PC-3 (cell line): ENCODE measurements at regions of chr17 and their contacts with region 1.

Region 1: DNA sequence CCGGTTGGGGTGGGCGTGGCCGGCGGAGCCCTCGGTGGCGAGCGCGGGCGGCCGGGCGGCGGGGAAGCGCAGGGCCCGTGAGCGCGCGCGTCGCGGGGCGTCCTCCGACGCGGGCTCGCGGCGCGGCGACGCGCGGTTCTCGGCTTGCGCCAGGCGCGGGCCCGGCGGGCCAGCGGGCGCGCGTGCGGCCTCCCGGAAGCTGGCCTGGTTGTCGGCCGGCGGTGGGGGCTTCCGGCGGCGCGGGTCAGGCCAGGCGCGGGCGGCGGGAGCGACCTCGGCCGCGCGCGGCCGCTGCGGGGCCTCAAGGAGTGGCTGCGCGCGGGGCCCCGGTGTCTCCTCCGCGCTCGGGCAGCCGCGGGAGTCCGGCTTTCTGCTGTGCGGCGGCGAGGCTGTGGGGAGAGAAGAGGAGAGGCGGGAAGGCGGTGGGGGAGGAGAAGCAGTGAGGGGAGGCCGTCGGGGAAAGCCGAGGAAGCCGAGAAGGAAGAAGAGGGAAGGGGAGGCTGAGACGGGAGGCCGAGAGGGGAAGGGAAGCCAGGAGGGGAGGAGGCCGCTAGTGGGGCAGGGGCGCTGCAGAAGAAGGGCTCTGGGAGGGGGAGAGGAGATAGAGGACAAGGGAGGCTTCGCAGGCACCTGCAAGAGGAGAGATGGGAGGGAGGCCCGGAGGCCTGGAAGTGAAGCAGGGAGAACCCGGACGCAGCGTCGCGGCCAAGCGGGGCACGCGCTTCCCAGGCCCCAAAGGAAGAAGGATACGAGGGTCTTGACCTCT is 2.5 kb downstream of the C17orf58 start:
- DNase-seq: peak; percentile 93
- ATAC-seq: peak; percentile 55
- H3K4me3 ChIP-seq: peak overlapping the region; percentile 90
- H3K27ac ChIP-seq: peak overlapping the region; percentile 80
- H3K4me1 ChIP-seq: peaks cover 29% of the 10 kb centered on the region
- H3K27me3 ChIP-seq: no peaks in the 10 kb centered on the region
- CTCF ChIP-seq: no peak

Region 2: GRCh38 chr17:67818110-67819002 is 175.4 kb before region 1 on chr17:
- CTCF ChIA-PET with region 1: no interaction called
- POLR2A ChIA-PET with region 1: no interaction called
- intact Hi-C with region 1: no loop called
- DNase-seq: peak; percentile 22
- ATAC-seq: no peak
- H3K4me3 ChIP-seq: no peak overlapping the region
- H3K27ac ChIP-seq: no peak overlapping the region
- H3K4me1 ChIP-seq: peaks cover 8% of the 10 kb centered on the region
- H3K27me3 ChIP-seq: no peaks in the 10 kb centered on the region
- CTCF ChIP-seq: no peak

Region 3: GRCh38 chr17:68019675-68020408 is 26.1 kb after region 1 on chr17:
- CTCF ChIA-PET with region 1: interaction called, 3 read pairs
- POLR2A ChIA-PET with region 1: no interaction called
- intact Hi-C with region 1: loop called (anchors 1 kb)
- DNase-seq: peak; percentile 99
- ATAC-seq: peak; percentile 91
- H3K4me3 ChIP-seq: peak overlapping the region; percentile 68
- H3K27ac ChIP-seq: peak overlapping the region; percentile 44
- H3K4me1 ChIP-seq: peaks cover 5% of the 10 kb centered on the region
- H3K27me3 ChIP-seq: no peaks in the 10 kb centered on the region
- CTCF ChIP-seq: no peak; the same call in 1 of the 2 replicates

Region 4: DNA sequence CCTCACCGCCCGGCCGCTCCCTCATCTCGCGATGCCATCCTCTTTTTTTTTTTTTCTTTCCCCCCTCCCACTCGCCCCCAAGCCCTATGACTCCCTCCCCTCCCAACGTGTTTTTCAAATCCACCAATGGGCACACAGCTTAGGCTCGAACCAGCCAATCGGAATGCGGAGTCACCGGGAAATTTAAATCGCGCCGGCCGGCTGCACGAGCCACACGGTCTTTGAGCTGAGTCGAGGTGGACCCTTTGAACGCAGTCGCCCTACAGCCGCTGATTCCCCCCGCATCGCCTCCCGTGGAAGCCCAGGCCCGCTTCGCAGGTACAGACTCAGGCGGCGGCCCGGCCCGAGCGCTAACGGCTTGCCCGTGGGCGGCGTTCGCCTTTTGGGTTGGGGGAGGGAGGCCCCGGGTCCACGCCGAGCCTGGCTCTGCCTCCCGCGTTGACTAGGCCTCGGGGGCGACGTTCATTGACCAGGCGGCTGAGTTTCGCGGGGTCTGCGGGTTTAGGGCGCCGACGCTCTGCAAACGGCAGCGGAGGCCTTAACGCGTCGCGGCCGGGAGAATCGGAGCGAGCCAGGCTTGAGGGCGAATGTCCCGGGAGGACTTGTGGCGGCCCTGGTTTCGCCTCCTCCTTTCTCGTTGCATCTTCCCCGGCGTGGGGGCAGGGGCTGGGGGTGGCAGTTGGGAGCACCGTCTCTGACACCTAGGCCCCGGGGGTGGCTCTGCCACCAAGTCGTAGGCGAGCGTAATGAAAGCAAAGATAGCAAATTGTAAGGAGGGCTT is 41.9 kb after region 1 on chr17 and contains the start of gene KPNA2:
- CTCF ChIA-PET with region 1: no interaction called
- POLR2A ChIA-PET with region 1: no interaction called
- intact Hi-C with region 1: loop called (anchors 5 kb)
- DNase-seq: peak; percentile 99
- ATAC-seq: peak; percentile 89
- H3K4me3 ChIP-seq: peak within 1 kb of the TSS; percentile 97
- H3K27ac ChIP-seq: peak within 1 kb of the TSS; percentile 66
- H3K4me1 ChIP-seq: peaks cover 24% of the 10 kb centered on the region
- H3K27me3 ChIP-seq: no peaks in the 10 kb centered on the region
- CTCF ChIP-seq: no peak
- total RNA-seq, gene KPNA2: 223 and 288 TPM in 2 replicates

Region 5: DNA sequence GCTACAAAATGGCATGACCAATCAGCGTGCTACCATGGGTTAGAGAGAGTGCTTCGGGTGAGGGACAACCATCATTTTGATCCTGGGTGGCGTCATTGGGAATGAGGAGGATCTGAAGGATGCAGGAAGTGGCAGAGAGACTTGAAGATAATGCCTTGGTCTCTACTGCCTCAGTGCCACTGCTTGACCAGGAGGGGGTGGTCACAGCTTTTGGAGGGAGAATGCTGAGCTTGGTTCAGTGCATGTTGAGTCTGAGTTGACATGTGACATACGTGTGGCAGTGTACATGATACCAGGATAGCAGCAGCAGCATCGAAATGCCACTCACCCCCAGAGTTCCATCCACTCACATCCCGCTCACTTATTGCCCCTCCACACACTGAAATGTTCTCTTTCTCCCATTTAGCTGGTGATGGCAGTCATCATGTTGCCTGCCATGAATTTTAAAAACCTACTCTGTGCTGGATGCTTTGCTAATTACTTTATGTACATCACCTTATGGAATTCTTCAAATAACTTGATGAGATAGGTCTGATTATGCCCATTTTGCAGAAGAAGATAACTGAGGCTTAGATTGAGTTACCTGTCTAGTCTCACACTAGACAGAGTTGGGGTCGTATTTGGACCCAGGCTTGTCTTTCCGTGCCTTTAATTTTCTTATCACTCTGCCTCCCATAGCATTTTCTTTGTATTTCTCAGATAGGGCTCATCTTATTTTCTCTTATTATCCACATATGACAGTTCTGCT is 334.2 kb after region 1 on chr17:
- CTCF ChIA-PET with region 1: no interaction called
- POLR2A ChIA-PET with region 1: interaction called, 12 read pairs
- intact Hi-C with region 1: no loop called
- DNase-seq: no peak
- ATAC-seq: no peak
- H3K4me3 ChIP-seq: no peak overlapping the region
- H3K27ac ChIP-seq: peak overlapping the region; percentile 27
- H3K4me1 ChIP-seq: peaks cover 8% of the 10 kb centered on the region; the same call in 1 of the 2 replicates
- H3K27me3 ChIP-seq: no peaks in the 10 kb centered on the region
- CTCF ChIP-seq: no peak

Region 6: GRCh38 chr17:69327060-69327831 is 1333.5 kb after region 1 on chr17 and contains the start of gene ABCA5:
- CTCF ChIA-PET with region 1: no interaction called
- POLR2A ChIA-PET with region 1: interaction called, 3 read pairs
- intact Hi-C with region 1: loop called (anchors 10 kb)
- DNase-seq: peak; percentile 99
- ATAC-seq: peak; percentile 88
- H3K4me3 ChIP-seq: peak within 1 kb of the TSS; percentile 74
- H3K27ac ChIP-seq: no peak within 1 kb of the TSS; the same call in 1 of the 2 replicates
- H3K4me1 ChIP-seq: peaks cover 18% of the 10 kb centered on the region
- H3K27me3 ChIP-seq: no peaks in the 10 kb centered on the region
- CTCF ChIP-seq: no peak
- total RNA-seq, gene ABCA5: 7.0 and 9.4 TPM in 2 replicates